ENCODE measurements at regions of chr3 and their contacts with region 1.

Region 1: DNA sequence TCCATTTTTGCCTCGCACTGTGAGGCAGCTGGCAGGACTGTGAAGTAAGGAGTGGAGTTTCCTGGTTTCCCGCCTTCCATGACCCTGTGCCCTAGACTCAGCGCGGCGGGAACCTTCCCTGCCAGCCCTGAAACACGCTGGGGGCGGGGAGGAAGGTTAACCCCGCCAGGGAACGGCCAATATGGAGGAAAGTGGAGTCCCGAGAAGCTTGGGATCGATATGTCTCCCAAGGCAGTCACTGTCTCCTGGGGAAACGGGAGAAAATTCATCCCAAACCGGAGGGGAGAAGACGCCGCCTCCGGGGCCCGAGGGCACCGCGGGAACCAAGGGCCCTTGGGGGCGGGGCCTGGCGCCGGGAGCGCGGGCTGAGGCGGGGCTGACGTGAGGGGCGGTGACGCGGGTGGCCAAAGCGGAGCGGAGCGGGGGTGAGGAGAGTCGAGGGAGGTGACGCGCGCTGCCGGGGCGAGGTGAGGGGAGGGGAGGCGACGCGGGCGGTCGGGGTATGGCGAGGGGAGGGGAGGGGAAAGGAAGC is at the start of gene HMCES:
- DNase-seq: peak; percentile 90
- H3K4me3 ChIP-seq: peak within 1 kb of the TSS; percentile 81 to 98 (median 89)
- H3K27ac ChIP-seq: peak within 1 kb of the TSS; percentile 83
- H3K4me1 ChIP-seq: peaks cover 15% of the 10 kb centered on the region
- H3K27me3 ChIP-seq: no peaks in the 10 kb centered on the region
- CTCF ChIP-seq: no peak
- POLR2A ChIP-seq: no peak
- total RNA-seq, gene HMCES: 38.9 and 40.8 TPM in 2 replicates

Region 2: GRCh38 chr3:129305592-129306091 is 27.1 kb after region 1 on chr3:
- CTCF ChIA-PET with region 1: interaction called, 3 read pairs
- POLR2A ChIA-PET with region 1: no interaction called
- dilution Hi-C with region 1: no loop called
- intact Hi-C with region 1: loop called (anchors 2 kb)
- DNase-seq: peak; percentile 83
- H3K4me3 ChIP-seq: peak overlapping the region in 2 of 3 experiments; percentile 0 to 13
- H3K27ac ChIP-seq: peak overlapping the region; percentile 26
- H3K4me1 ChIP-seq: peaks cover 11% of the 10 kb centered on the region
- H3K27me3 ChIP-seq: no peaks in the 10 kb centered on the region
- CTCF ChIP-seq: no peak
- POLR2A ChIP-seq: no peak

Region 3: DNA sequence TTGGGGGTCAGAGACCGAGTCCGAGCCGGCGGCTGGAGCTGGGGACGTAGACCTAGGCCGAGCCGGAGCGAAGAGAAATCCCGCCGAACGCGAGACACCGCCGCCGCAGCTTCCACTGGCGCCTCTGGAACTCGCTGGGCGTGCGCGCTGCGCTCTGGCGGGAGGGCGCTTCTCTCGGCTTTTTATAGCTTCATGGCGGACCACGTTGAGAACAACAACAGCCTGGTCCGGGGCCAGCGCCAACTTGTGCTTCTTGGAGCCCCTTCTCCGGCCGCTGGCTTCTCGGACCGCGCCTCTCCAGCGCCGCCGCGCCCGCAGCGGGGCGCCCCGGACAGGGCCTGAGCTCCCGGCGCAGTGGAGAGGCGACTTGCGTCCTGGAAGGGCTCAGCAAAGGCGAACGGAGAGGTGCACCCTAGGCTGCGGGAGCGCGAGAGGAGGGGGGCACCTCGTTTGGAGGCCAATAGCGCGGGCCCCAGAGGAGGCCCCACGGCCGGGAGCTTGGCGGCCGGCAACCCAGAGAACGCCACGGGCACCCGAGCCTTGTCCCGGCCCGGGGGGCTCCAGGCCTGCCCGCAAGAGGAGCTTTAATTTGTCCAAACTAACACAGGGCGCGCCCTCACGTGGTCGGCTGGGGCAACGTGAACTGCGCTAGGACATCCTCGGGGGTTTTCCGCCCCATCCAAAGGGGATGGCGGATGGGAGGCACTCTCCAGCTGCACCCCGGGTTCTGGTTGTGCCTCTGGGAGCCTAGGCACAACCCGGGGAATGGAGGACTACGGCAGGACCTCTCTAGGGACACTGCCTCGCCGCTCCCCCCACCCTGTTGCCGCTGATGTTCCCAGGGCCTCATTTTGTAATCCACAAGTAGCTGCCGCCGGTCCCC is 37.9 kb after region 1 on chr3:
- CTCF ChIA-PET with region 1: interaction called, 19 read pairs
- POLR2A ChIA-PET with region 1: interaction called, 12 read pairs
- dilution Hi-C with region 1: no loop called
- intact Hi-C with region 1: loop called (anchors 1 kb)
- DNase-seq: peak; percentile 78
- H3K4me3 ChIP-seq: peak overlapping the region; percentile 51 to 90 (median 68)
- H3K27ac ChIP-seq: peak overlapping the region; percentile 76
- H3K4me1 ChIP-seq: peaks cover 4% of the 10 kb centered on the region
- H3K27me3 ChIP-seq: no peaks in the 10 kb centered on the region
- CTCF ChIP-seq: peak; percentile 52 to 63
- POLR2A ChIP-seq: peak; percentile 100

Region 4: DNA sequence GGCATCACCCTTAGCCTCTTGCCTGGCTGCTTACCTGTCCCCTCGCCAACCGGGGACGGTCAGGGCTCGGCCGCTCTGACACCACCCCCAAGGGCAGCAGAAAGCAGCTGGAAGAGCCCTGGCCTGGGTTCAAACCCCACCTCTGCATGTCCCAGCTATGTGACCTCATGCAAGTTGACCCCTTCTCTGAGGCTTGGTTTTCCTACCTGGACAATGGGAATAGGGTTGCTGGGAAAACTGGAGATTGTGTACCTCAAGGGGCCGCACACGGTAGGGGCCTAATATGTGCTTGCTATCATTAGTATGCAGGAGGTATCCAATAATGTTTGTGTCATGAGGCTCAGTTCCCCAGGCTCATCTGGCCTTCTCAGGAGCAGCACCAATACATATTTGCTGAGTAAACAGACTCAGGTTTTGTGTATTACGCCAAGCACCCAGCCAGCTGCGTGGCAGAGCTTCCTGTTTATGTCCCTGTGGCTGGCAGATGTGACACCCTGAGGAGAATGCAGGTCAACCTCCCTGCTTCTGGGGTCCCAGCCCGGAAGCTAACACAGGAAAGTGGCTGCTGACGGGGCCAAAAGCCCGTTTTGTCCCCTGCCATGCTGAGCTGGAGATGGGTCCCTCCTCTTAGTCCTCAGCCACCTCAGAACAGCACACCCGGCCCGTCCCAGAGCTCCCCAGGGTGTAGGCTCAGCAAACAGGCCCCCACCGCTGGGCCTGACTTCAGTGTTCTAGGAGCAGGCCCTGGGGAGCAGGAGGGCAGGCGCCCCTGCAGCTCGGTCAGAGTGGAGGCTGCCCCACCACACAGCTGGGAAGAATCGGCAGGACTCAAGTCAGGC is 298.2 kb after region 1 on chr3:
- CTCF ChIA-PET with region 1: no interaction called
- POLR2A ChIA-PET with region 1: no interaction called
- dilution Hi-C with region 1: no loop called
- intact Hi-C with region 1: no loop called
- DNase-seq: peak; percentile 37
- H3K4me3 ChIP-seq: no peak overlapping the region
- H3K27ac ChIP-seq: peak overlapping the region; percentile 52
- H3K4me1 ChIP-seq: peaks cover 12% of the 10 kb centered on the region
- H3K27me3 ChIP-seq: no peaks in the 10 kb centered on the region
- CTCF ChIP-seq: no peak
- POLR2A ChIP-seq: no peak

Measured in endothelial cell of umbilical vein (primary cell).